ENCODE measurements at regions of chr1 and their contacts with region 1.

Region 1: GRCh38 chr1:211788626-211789025 is 41.9 kb downstream of the LPGAT1 start:
- DNase-seq: no peak
- ATAC-seq: no peak
- H3K4me3 ChIP-seq: no peak overlapping the region
- H3K27ac ChIP-seq: no peak overlapping the region
- H3K4me1 ChIP-seq: no peaks in the 10 kb centered on the region
- H3K27me3 ChIP-seq: no peaks in the 10 kb centered on the region
- CTCF ChIP-seq: no peak

Region 2: DNA sequence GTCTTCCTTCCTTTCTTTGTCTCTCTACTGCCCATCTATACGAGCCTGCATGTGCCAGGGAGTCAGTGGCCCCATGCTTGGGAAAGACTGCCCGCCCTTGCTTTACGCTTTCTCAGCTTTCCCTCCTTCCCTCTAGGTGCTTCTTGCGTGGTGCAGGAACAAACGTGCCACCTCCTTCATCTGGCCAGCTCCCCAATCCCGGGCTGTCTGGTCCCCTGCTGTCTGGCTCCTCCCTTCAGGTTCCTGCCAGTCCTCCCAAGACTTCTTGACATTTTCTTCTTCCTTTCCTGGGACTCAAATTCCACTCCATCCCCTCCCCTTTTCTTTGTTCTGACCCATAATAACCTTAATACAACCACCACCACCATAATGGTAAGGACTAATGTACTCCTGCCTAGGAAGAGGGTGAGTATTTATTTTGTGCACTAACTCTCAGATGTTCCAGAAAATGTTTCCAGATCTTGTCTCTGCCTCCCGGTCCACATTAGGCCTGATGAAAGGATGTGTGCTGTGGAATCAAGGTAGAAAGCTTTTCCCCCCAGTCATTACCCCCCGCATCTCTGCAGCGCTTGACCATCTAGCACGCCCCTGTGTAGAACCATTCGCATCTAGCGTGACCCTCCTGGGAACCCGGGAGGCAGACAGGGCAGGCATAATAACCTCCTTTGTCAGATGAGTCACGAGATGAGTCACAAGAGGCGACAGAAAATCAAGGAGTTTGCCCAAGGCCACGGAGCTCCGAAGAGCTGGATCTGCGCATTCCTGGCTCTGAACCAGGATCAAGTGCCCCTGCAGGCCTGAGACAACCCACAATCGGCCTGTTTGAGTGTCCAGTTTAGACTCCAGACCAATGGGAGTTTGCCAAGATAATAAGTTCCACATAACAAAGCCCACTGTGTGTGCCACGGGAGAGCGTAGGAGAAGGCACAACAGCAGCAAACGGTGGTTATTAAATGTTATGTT is 53.1 kb before region 1 on chr1:
- CTCF ChIA-PET with region 1: no interaction called
- POLR2A ChIA-PET with region 1: no interaction called
- intact Hi-C with region 1: loop called (anchors 5 kb)
- DNase-seq: peak; percentile 99
- ATAC-seq: peak; percentile 95
- H3K4me3 ChIP-seq: peak overlapping the region; percentile 44; the same call in 1 of the 2 replicates
- H3K27ac ChIP-seq: peak overlapping the region; percentile 72
- H3K4me1 ChIP-seq: peaks cover 27% of the 10 kb centered on the region
- H3K27me3 ChIP-seq: no peaks in the 10 kb centered on the region
- CTCF ChIP-seq: no peak

Region 3: GRCh38 chr1:211752951-211753486 is 35.6 kb before region 1 on chr1:
- CTCF ChIA-PET with region 1: no interaction called
- POLR2A ChIA-PET with region 1: no interaction called
- intact Hi-C with region 1: no loop called
- DNase-seq: no peak
- ATAC-seq: no peak
- H3K4me3 ChIP-seq: no peak overlapping the region
- H3K27ac ChIP-seq: no peak overlapping the region
- H3K4me1 ChIP-seq: no peaks in the 10 kb centered on the region
- H3K27me3 ChIP-seq: no peaks in the 10 kb centered on the region
- CTCF ChIP-seq: no peak

Region 4: GRCh38 chr1:211775170-211775569 is 13.5 kb before region 1 on chr1:
- CTCF ChIA-PET with region 1: no interaction called
- POLR2A ChIA-PET with region 1: no interaction called
- intact Hi-C with region 1: no loop called
- DNase-seq: no peak
- ATAC-seq: no peak
- H3K4me3 ChIP-seq: no peak overlapping the region
- H3K27ac ChIP-seq: no peak overlapping the region
- H3K4me1 ChIP-seq: no peaks in the 10 kb centered on the region
- H3K27me3 ChIP-seq: no peaks in the 10 kb centered on the region
- CTCF ChIP-seq: no peak

Region 5: DNA sequence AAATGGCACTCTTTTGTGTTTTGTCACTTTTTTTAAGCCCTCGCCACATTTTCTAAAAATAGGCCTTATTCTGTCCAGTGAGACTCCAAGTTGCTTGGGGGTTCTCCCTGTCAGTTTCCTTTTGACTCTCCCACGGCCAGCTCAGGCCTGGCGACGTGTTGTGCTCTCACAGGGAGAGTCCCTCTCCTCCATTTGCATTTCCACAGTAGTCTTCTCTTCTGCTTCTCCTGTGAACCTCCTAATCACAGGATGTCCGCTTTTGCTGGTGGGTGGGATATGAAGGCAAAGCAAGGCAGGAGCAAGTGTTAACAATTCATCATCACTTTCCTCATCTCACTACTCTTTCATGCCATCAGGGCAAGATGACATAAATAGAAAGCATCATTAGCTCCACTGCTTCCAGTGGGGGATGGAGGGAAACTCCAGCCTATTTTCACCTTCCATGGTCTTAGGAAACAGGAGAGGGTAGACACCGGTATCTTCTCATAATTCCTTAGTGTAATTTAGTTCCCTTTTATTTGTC is 146.9 kb after region 1 on chr1:
- CTCF ChIA-PET with region 1: no interaction called
- POLR2A ChIA-PET with region 1: no interaction called
- intact Hi-C with region 1: no loop called
- DNase-seq: no peak
- ATAC-seq: no peak
- H3K4me3 ChIP-seq: no peak overlapping the region
- H3K27ac ChIP-seq: no peak overlapping the region
- H3K4me1 ChIP-seq: no peaks in the 10 kb centered on the region
- H3K27me3 ChIP-seq: no peaks in the 10 kb centered on the region
- CTCF ChIP-seq: no peak